Activated CD4-positive, alpha-beta memory T cell treated with anti-CD3 and anti-CD28 coated beads, Interleukin-2, amount 10 ng/mL, durations not matched to agents 7 days and 5 days (primary cell): ENCODE measurements at regions of chr7 and their contacts with region 1.

Region 1: DNA sequence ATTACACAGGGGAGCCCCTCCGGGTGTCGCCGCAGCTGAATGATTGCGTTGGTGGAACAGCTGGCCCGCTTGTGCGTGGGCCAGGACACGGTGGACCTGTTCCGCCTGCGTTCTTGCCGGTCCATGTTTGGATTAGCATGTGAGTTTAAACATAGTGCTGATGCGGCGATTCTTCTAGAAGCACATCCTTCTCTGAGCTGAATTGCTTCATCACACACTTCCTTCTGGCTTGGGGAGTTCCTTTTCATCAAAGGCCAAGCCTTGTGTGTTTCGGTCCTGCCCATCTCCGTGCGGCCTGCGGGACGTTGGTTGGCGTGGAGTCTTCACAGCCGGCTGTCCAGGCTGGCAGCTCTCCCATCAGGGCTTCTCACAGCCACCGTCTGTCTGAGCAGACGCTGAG is 45.5 kb upstream of the SLC29A4 start:
- DNase-seq: no peak
- H3K4me3 Mint-ChIP-seq: no peak overlapping the region
- H3K27ac Mint-ChIP-seq: no peak overlapping the region
- H3K4me1 Mint-ChIP-seq: peaks cover 12% of the 10 kb centered on the region
- H3K27me3 Mint-ChIP-seq: peaks cover 12% of the 10 kb centered on the region

Region 2: DNA sequence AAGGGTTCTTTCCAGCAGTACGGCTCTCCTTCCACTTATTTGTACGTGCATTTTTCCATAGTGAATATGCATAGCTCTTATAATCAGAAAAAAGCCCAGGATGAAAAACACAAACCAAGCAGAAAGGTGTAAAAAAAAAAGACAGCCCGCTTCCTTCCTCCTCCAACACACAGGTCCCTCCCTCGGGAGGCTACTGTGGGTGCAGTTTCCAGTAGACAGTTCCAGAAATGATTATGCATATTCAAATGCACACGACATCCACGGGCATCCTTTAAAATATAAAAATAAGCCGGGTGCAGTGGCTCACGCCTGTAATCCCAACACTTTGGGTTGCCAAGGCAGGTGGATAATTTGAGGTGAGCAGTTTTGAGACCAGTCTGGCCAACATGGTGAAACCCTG is 126.4 kb after region 1 on chr7:
- CTCF ChIA-PET with region 1: interaction called, 10 read pairs
- POLR2A ChIA-PET with region 1: no interaction called
- DNase-seq: peak; percentile 30
- H3K4me3 Mint-ChIP-seq: peak overlapping the region; percentile 54
- H3K27ac Mint-ChIP-seq: peak overlapping the region; percentile 65
- H3K4me1 Mint-ChIP-seq: peaks cover 28% of the 10 kb centered on the region
- H3K27me3 Mint-ChIP-seq: no peaks in the 10 kb centered on the region

Region 3: DNA sequence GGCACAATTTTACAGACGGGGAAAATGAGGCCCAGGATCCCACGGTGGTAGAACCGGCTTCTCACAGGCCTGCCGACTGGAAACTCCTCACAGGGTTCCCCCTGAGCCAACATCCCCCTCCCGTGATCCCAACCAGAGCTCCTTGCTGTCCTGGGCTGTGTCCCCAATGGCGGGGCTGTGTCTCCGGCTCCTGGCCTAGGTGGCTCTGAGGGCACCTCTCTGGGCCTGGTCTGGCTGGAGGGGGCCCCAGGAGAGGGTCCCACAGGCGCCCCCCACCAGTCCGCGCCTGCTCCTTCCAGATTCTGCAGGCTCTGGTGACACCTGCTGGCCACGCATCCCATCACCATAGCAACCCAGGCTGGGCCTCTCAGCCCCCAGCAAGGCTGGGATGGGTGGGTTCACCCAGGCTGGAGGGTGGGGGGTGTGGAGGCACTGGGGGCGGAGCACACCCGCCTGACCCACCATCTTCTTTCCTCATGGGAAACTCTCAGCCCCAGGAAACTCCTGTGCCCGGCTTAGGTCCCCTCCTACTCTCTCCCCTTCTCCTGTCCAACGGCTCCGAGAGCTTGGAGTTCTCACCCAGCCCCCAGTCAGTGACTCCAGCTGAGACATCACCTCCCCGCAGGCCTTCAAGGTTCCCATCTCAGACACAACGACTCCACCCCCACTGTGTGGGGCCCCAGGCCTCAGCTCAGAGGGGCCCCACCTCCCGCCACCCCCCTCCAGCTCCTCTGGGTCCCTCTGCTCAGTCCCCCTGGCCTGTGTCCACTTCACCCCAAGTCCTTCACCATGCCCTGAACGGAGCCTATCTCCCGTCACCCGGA is 213.5 kb after region 1 on chr7:
- CTCF ChIA-PET with region 1: interaction called, 22 read pairs
- POLR2A ChIA-PET with region 1: no interaction called
- DNase-seq: peak; percentile 27
- H3K4me3 Mint-ChIP-seq: no peak overlapping the region
- H3K27ac Mint-ChIP-seq: no peak overlapping the region
- H3K4me1 Mint-ChIP-seq: no peaks in the 10 kb centered on the region
- H3K27me3 Mint-ChIP-seq: peaks cover 1% of the 10 kb centered on the region